ENCODE measurements at regions of chr10 and their contacts with region 1.

Region 1: DNA sequence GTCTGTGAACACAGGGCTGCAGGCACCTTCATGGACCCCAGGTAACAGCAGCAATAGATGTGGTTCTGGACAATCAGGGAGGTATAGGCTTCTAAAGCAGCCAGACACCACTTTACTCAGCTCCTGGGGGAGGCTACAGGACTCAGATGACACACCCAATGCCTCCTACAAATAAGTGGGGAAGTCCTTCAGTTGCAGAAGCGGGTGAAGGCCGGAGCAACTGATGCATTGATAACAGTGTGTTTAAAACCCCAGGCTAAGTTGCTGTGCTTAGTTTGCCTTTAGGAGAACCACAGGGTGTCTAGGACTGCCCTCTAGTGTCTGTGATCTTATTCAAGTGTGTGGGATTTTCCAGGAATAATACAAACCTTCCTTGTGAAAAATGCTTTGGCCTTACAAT is 5.9 kb upstream of the ITGA8 start:
- DNase-seq: peak; percentile 53
- H3K4me3 Mint-ChIP-seq: no peak overlapping the region
- H3K27ac Mint-ChIP-seq: no peak overlapping the region
- H3K4me1 Mint-ChIP-seq: no peaks in the 10 kb centered on the region
- H3K27me3 Mint-ChIP-seq: peaks cover 37% of the 10 kb centered on the region
- CTCF ChIP-seq: peak; percentile 42

Region 2: DNA sequence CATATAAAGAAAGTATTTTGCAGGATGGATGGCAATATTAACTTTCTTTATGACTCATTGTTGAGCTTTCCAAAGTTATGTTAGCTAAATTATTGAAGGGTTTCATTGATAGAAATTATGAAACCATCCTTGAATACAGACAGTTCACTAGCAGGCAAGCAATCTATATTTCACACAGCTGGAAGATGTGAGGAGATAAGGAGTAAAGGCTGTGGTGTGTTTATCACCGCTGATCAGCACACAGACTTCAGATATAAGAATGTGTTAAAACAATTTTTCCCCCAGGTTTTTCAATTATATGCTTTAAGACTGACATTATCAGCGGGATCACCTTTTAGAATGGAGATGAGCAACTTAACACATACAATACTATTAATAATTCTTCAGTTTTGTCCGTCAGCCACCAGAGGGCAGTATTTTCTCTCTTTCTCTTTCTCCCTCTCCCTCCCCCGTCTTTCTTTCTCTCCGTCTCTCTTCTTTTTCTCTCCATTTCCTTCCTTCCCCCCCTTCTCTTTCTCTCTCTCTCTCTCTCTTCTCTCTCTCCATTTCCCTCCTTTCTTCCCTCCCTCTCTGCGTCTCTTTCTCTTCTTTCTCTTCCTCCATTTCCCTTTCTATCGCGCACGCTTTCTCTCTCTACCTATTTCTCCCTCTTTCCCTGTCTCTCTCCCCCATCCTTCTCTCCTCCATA is 291.6 kb before region 1 on chr10:
- CTCF ChIA-PET with region 1: interaction called, 16 read pairs
- POLR2A ChIA-PET with region 1: no interaction called
- intact Hi-C with region 1: loop called (anchors 1 kb)
- DNase-seq: peak; percentile 69
- H3K4me3 Mint-ChIP-seq: peak overlapping the region; percentile 71
- H3K27ac Mint-ChIP-seq: peak overlapping the region; percentile 61
- H3K4me1 Mint-ChIP-seq: peaks cover 7% of the 10 kb centered on the region
- H3K27me3 Mint-ChIP-seq: peaks cover 33% of the 10 kb centered on the region
- CTCF ChIP-seq: peak; percentile 64

Region 3: DNA sequence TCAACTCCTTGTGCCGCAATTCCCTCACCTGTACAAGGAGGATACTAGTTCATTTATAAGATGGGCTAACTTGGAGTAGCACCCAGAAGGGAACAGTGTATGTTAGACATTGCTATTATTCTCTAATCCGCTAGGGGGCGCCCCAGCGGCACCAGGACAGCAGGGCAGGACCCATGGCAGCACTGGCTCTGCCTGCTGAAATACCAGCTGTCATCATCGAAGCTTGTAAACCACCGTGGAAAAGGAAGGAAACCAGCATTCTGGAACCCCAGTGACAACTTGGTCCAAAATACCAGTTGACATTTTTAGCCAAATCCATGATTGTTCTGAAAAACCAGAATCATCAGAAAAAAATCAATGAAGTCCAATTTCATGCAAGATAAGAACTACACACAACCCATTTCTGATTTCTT is 140.3 kb before region 1 on chr10:
- CTCF ChIA-PET with region 1: no interaction called
- POLR2A ChIA-PET with region 1: no interaction called
- intact Hi-C with region 1: loop called (anchors 1 kb)
- DNase-seq: peak; percentile 61
- H3K4me3 Mint-ChIP-seq: no peak overlapping the region
- H3K27ac Mint-ChIP-seq: no peak overlapping the region
- H3K4me1 Mint-ChIP-seq: no peaks in the 10 kb centered on the region
- H3K27me3 Mint-ChIP-seq: peaks cover 30% of the 10 kb centered on the region
- CTCF ChIP-seq: peak; percentile 76

Region 4: DNA sequence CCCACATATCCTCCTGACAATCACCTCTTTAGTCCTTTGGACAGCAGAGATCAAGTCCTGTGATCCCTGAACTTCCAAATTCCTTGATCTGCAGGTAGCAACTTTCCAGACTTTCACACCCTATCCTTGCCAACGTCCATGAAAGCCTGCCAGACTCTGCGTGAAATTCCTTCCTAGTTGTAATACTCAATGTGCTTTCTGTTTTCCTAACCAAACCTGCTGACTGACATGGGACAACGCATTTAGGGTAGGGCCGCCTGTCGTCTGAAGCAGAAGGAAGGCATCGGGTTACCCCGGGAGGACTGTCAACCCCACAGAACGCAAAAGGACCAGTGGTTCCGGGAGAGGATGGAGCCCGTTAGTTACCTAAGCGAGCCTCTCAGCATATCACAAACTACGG is 29.8 kb before region 1 on chr10:
- CTCF ChIA-PET with region 1: no interaction called
- POLR2A ChIA-PET with region 1: no interaction called
- intact Hi-C with region 1: no loop called
- DNase-seq: no peak
- H3K4me3 Mint-ChIP-seq: no peak overlapping the region
- H3K27ac Mint-ChIP-seq: no peak overlapping the region
- H3K4me1 Mint-ChIP-seq: no peaks in the 10 kb centered on the region
- H3K27me3 Mint-ChIP-seq: peaks cover 70% of the 10 kb centered on the region
- CTCF ChIP-seq: no peak

Region 5: GRCh38 chr10:15738270-15738925 is 12.8 kb after region 1 on chr10:
- CTCF ChIA-PET with region 1: interaction called, 10 read pairs
- POLR2A ChIA-PET with region 1: interaction called, 3 read pairs
- intact Hi-C with region 1: no loop called
- DNase-seq: no peak
- H3K4me3 Mint-ChIP-seq: no peak overlapping the region
- H3K27ac Mint-ChIP-seq: no peak overlapping the region
- H3K4me1 Mint-ChIP-seq: no peaks in the 10 kb centered on the region
- H3K27me3 Mint-ChIP-seq: peaks cover 44% of the 10 kb centered on the region
- CTCF ChIP-seq: no peak

Region 6: GRCh38 chr10:16401416-16401815 is 675.8 kb after region 1 on chr10:
- CTCF ChIA-PET with region 1: no interaction called
- POLR2A ChIA-PET with region 1: no interaction called
- intact Hi-C with region 1: no loop called
- DNase-seq: no peak
- H3K4me3 Mint-ChIP-seq: no peak overlapping the region
- H3K27ac Mint-ChIP-seq: no peak overlapping the region
- H3K4me1 Mint-ChIP-seq: no peaks in the 10 kb centered on the region
- H3K27me3 Mint-ChIP-seq: no peaks in the 10 kb centered on the region
- CTCF ChIP-seq: no peak